Left lung (tissue), 14 donors: ENCODE measurements at regions of chr1 and their contacts with region 1.

Region 1: GRCh38 chr1:209850342-209850979 is 22.7 kb downstream of the UTP25 start:
- DNase-seq: no peak
- ATAC-seq: peak; percentile 56
- H3K4me3 ChIP-seq: no peak overlapping the region
- H3K27ac ChIP-seq: no peak overlapping the region
- H3K4me1 ChIP-seq: no peaks in the 10 kb centered on the region
- H3K27me3 ChIP-seq: no peaks in the 10 kb centered on the region
- CTCF ChIP-seq: peak in 1 of 2 donors; percentile 15

Region 2: GRCh38 chr1:209965996-209966395 is 115.5 kb after region 1 on chr1:
- intact Hi-C with region 1: no loop called
- DNase-seq: peak in 1 of 4 donors; percentile 9
- ATAC-seq: no peak
- H3K4me3 ChIP-seq: no peak overlapping the region
- H3K27ac ChIP-seq: no peak overlapping the region
- H3K4me1 ChIP-seq: no peaks in the 10 kb centered on the region
- H3K27me3 ChIP-seq: no peaks in the 10 kb centered on the region
- CTCF ChIP-seq: no peak

Region 3: GRCh38 chr1:209993061-209993830 is 142.8 kb after region 1 on chr1:
- intact Hi-C with region 1: loop called in 1 of 2 experiments (anchors 10 kb)
- DNase-seq: peak in 1 of 4 donors; percentile 54
- ATAC-seq: no peak
- H3K4me3 ChIP-seq: no peak overlapping the region
- H3K27ac ChIP-seq: no peak overlapping the region
- H3K4me1 ChIP-seq: no peaks in the 10 kb centered on the region
- H3K27me3 ChIP-seq: no peaks in the 10 kb centered on the region
- CTCF ChIP-seq: no peak